ENCODE measurements at regions of chrX and their contacts with region 1.

Region 1: DNA sequence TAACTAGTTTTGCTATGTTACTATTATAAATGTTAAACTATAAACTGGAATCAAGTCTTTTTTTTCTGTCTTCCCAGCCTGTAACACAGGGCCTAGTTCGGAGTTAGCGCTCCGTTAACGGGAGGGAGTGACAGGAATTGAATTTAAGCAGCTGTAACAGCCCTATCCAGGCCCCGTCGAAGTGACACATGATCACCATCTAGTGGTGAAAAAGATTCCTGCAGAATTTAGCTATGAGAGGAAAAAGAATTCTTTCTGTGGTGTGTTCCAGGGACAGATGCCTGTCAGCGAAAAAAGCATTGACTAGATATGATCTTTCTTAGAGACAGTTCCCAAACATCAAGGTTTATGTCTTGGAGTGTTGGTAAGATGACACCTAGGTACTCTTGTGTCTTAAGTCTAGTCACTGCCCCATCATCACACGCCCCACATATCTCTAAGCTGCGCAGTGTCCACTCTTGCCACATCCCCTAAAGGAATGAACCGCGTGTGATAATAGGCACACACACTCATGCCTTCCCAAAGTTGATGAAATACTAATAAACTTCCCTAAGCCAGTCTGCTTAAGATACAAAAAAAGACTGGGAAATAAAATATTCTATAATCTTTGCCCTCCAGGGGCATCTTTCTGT is 2.0 kb downstream of the GAB3 start:
- DNase-seq: peak; percentile 56
- ATAC-seq: peak; percentile 57 to 87; a peak in 5 of 6 replicates
- H3K4me3 ChIP-seq: no peak overlapping the region
- H3K27ac ChIP-seq: no peak overlapping the region
- H3K4me1 ChIP-seq: no peaks in the 10 kb centered on the region
- CTCF ChIP-seq: peak; percentile 73
- EP300 ChIP-seq: no peak
- POLR2A ChIP-seq: no peak
- RAD21 ChIP-seq: peak; percentile 82

Region 2: DNA sequence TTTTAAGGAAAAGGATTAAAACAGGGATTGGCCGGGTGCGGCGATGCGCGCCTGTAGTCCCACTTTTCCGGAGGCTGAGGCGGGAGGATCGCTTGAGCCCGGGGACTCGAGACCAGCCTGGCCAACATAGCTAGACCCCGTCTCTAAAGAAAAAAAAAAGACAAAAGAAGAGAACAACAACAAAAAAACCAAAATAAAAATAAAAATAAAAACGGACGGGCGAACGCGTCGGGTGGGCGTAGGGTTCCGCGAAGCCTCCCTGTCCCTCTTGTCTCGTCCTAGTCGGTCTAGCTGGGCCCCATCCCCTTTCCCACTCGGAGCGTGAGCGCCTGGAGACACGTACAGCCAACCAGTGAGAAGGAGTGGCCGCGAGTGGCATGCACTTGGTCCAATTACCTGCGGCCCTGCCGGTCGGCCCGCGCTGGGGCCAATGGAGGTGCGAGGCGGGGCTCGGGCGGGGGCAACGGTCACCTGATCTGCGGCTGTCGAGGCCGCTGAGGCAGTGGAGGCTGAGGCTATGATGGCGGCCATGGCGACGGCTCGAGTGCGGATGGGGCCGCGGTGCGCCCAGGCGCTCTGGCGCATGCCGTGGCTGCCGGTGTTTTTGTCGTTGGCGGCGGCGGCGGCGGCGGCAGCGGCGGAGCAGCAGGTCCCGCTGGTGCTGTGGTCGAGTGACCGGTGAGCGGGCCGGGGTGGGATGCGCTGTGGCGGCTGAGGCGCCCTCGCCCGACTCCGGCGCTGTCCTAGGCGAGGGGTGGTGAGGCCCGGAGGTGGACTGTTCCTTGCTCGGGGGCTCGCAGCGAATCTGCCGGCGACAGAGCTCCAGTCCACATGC is 320.4 kb before region 1 on chrX and contains the start of gene ATP6AP1:
- CTCF ChIA-PET with region 1: no interaction called
- POLR2A ChIA-PET with region 1: no interaction called
- DNase-seq: peak; percentile 83 to 97
- ATAC-seq: peak; percentile 99
- H3K4me3 ChIP-seq: peak within 1 kb of the TSS; percentile 73
- H3K27ac ChIP-seq: peak within 1 kb of the TSS; percentile 80 to 91
- H3K4me1 ChIP-seq: peaks cover 11% of the 10 kb centered on the region; the same call in 2 of the 3 replicates
- CTCF ChIP-seq: no peak
- EP300 ChIP-seq: no peak
- POLR2A ChIP-seq: peak; percentile 79
- RAD21 ChIP-seq: no peak
- polyA plus RNA-seq, gene ATP6AP1: 62.6 and 69.6 TPM in 2 replicates

Region 3: GRCh38 chrX:154505734-154506133 is 243.1 kb before region 1 on chrX:
- CTCF ChIA-PET with region 1: no interaction called
- POLR2A ChIA-PET with region 1: no interaction called
- DNase-seq: no peak
- ATAC-seq: peak in 1 of 2 experiments; percentile 21; a peak in 2 of 6 replicates
- H3K4me3 ChIP-seq: no peak overlapping the region
- H3K27ac ChIP-seq: no peak overlapping the region
- H3K4me1 ChIP-seq: no peaks in the 10 kb centered on the region
- CTCF ChIP-seq: no peak
- EP300 ChIP-seq: no peak
- POLR2A ChIP-seq: no peak
- RAD21 ChIP-seq: no peak

Region 4: GRCh38 chrX:154593201-154593600 is 155.6 kb before region 1 on chrX:
- CTCF ChIA-PET with region 1: interaction called, 11 read pairs
- POLR2A ChIA-PET with region 1: no interaction called
- DNase-seq: no peak
- ATAC-seq: no peak
- H3K4me3 ChIP-seq: no peak overlapping the region
- H3K27ac ChIP-seq: no peak overlapping the region
- H3K4me1 ChIP-seq: no peaks in the 10 kb centered on the region
- CTCF ChIP-seq: no peak
- EP300 ChIP-seq: no peak
- POLR2A ChIP-seq: no peak
- RAD21 ChIP-seq: no peak

Region 5: DNA sequence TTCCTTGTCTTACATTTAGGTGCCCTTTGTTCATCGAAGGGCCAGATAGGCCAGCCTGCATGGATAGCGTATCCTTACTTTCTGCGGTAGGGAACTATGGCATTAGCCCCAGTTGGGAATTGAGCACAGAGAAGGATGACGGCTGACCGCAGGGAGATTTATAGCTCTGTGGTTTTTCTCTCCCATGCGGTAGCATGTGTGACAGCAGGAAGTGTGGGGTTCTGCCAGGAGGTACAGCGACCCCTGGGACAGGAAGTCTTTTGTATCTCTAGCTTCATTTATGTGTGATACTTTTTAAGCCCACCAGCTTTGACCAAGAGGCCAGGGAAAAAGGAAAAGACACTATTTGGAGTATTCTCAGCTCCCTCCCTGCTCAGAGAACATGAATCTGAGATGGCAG is 31.0 kb before region 1 on chrX:
- CTCF ChIA-PET with region 1: interaction called, 44 read pairs
- POLR2A ChIA-PET with region 1: no interaction called
- DNase-seq: no peak
- ATAC-seq: no peak
- H3K4me3 ChIP-seq: no peak overlapping the region
- H3K27ac ChIP-seq: no peak overlapping the region
- H3K4me1 ChIP-seq: 0 out of 3 replicates have a peak, but pooled peaks cover 5% of the 10 kb centered on the region
- CTCF ChIP-seq: no peak
- EP300 ChIP-seq: no peak
- POLR2A ChIP-seq: no peak
- RAD21 ChIP-seq: no peak

Region 6: DNA sequence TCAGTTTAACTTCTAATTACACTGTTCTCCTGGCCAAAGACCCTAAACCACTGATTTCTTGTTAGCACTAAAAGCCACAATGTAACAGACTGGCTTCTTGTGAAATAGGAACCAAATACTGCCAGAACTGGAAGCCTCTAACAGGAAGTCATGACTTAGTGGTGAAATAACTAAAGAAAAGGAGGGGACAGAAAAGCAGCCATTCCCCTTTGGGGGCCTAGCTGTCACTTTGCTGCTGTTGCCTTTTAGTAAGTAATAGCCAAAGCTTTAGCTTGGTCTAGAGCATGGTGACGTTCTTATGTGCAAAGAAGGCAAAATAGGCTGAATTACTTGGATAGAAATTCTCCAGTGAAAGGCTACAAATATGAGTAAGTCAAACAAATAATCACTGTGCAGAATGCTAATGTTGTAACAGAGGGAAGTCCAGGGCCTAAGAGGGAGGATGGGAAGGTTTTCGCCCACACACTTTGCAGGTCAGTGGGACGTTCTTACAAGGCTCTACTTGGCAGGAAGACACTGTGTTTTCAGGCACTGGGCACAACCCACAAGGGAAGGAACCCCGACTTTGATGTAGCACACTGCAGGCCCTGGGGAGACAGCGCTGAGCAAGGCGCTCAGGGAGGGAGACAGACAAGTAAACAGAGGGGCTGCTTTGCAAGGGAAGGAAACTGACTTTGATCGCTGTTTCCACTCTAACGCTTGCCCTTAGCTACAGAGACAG is 14.6 kb before region 1 on chrX:
- CTCF ChIA-PET with region 1: interaction called, 28 read pairs
- POLR2A ChIA-PET with region 1: no interaction called
- DNase-seq: peak in 1 of 2 experiments; percentile 19
- ATAC-seq: peak; percentile 55 to 57; a peak in 4 of 6 replicates
- H3K4me3 ChIP-seq: no peak overlapping the region
- H3K27ac ChIP-seq: peak overlapping the region; percentile 63 to 80
- H3K4me1 ChIP-seq: peaks cover 64% of the 10 kb centered on the region
- CTCF ChIP-seq: no peak
- EP300 ChIP-seq: no peak
- POLR2A ChIP-seq: no peak
- RAD21 ChIP-seq: no peak

Region 7: DNA sequence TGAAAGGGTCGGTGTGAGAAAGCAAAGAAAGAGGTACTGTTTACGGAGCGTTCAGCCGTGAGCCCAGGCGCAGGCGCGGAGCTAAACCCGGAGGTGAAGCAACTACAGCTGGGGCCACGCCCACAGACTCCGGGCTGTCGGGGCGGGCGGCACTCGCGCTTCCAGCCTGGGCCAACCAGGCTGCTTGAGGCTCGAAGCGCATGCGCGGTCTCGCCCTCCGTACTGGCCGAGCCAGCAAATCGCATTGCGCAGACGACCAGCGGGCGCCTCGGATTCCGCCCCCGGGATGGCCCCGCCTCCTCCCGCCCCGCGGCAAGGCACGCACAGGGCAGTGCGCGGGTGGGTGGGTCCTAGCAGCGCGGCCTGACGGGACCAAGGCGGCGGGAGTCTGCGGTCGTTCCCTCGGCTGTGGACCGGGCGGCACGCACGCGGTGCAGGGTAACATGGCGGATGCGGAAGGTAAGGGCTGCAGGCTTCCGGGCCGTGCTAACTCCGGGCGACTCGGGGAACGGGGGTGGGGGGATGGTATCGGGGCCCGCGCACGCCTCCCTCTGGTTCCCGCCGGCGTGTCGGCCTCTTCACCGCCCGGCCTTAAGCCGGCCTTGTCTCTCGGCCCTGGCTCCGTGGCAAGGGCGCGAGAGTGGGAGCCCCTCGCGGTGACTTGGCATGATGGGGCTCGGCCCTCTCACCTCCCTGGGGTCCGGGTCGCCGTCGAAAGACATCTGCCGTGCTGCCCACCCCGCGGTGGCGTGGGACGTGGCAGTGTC is 13.9 kb after region 1 on chrX and contains the start of gene DKC1:
- CTCF ChIA-PET with region 1: interaction called, 13 read pairs
- POLR2A ChIA-PET with region 1: interaction called, 5 read pairs
- DNase-seq: peak; percentile 80 to 97
- ATAC-seq: peak; percentile 88 to 95
- H3K4me3 ChIP-seq: peak within 1 kb of the TSS; percentile 97
- H3K27ac ChIP-seq: peak within 1 kb of the TSS; percentile 97 to 98
- H3K4me1 ChIP-seq: peaks cover 16% of the 10 kb centered on the region
- CTCF ChIP-seq: no peak
- EP300 ChIP-seq: no peak
- POLR2A ChIP-seq: peak; percentile 83
- RAD21 ChIP-seq: no peak
- polyA plus RNA-seq, gene DKC1: 137 and 209 TPM in 2 replicates